Kidney (tissue), 22 donors: ENCODE measurements at regions of chr5 and their contacts with region 1.

Region 1: GRCh38 chr5:168219515-168220410 is 71.7 kb upstream of the WWC1 start:
- DNase-seq: peak in 4 of 5 donors; percentile 66 to 92 (median 83)
- H3K4me3 ChIP-seq: peak overlapping the region in 2 of 3 donors; percentile 29 to 36
- H3K27ac ChIP-seq: no peak overlapping the region
- H3K4me1 ChIP-seq: peaks cover 0 to 3% (median 0%) of the 10 kb centered on the region in 3 donors
- H3K27me3 ChIP-seq: no peaks in the 10 kb centered on the region
- CTCF ChIP-seq: peak; percentile 96

Region 2: DNA sequence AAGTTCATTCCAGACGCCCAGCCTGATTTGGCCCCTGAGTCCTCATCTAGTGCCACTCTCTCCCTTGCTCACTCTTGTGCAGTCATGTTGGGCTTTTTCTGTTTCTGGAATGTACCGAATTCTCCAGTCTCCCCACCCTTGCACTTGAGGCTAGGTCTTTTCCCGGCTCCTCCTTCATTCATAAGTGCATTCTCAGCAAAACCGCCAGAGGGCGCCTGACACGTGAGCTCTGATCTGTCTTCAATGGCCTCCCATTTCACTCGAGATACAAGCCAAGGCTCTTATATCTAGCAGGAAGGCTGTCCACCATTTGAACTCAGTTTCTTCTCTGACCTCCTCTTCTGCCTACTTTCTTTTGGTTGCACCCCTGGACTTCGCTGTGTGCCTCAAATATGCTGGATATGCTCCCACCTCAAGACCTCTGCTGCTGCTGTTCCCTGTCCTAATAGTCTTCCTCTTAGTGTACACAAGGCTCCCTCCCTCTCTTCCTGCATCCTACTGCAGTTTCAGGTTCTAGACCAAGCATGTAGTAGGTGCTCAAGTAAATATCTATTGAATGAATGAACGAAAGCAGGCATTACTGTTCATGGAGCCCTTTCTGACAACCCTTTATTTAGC is 496.4 kb before region 1 on chr5:
- intact Hi-C with region 1: loop called (anchors 10 kb)
- DNase-seq: peak; percentile 68 to 93 (median 82)
- H3K4me3 ChIP-seq: no peak overlapping the region
- H3K27ac ChIP-seq: no peak overlapping the region
- H3K4me1 ChIP-seq: peaks cover 0 to 2% (median 0%) of the 10 kb centered on the region in 3 donors
- H3K27me3 ChIP-seq: no peaks in the 10 kb centered on the region
- CTCF ChIP-seq: peak; percentile 90